HepG2 (cell line): ENCODE measurements at regions of chr17 and their contacts with region 1.

Region 1: GRCh38 chr17:42287926-42288802 is at the start of gene STAT5A:
- DNase-seq: peak; percentile 40
- ATAC-seq: peak; percentile 77
- H3K4me3 ChIP-seq: peak within 1 kb of the TSS; percentile 56 to 72 (median 62)
- H3K27ac ChIP-seq: no peak within 1 kb of the TSS
- H3K4me1 ChIP-seq: peaks cover 35% of the 10 kb centered on the region
- H3K27me3 ChIP-seq: peaks cover 6 to 35% of the 10 kb centered on the region in 2 experiments; a peak in 4 of 5 replicates
- CTCF ChIP-seq: peak; percentile 11; the same call in 1 of the 2 replicates
- EP300 ChIP-seq: no peak
- POLR2A ChIP-seq: no peak
- RAD21 ChIP-seq: no peak
- total RNA-seq, gene STAT5A: 4.1 and 4.5 TPM in 2 replicates

Region 2: DNA sequence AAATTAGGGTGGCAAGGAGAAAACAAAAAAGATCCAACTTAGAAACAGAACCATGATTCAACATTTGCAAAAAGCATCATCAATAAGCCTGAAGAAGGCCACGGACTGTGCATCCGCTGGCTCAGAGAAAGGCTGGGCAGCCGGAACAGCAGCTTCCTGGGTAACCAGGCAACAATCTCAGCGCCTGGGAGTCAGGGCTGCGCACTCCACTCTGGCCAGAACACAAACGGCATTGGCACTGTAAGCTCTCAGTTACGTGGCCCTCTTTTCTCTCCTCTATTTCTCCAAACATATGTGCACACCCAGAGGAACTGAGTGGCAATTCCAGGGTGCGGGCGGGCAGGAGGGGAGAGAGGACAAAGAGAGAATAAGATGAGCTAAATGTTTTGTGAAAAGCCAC is 87.5 kb before region 1 on chr17:
- CTCF ChIA-PET with region 1: no interaction called
- POLR2A ChIA-PET with region 1: no interaction called
- in situ Hi-C with region 1: no loop called
- intact Hi-C with region 1: no loop called
- DNase-seq: no peak
- ATAC-seq: no peak
- H3K4me3 ChIP-seq: no peak overlapping the region
- H3K27ac ChIP-seq: no peak overlapping the region
- H3K4me1 ChIP-seq: peaks cover 16% of the 10 kb centered on the region
- H3K27me3 ChIP-seq: no peaks in the 10 kb centered on the region
- CTCF ChIP-seq: no peak
- EP300 ChIP-seq: no peak
- POLR2A ChIP-seq: no peak
- RAD21 ChIP-seq: no peak

Region 3: DNA sequence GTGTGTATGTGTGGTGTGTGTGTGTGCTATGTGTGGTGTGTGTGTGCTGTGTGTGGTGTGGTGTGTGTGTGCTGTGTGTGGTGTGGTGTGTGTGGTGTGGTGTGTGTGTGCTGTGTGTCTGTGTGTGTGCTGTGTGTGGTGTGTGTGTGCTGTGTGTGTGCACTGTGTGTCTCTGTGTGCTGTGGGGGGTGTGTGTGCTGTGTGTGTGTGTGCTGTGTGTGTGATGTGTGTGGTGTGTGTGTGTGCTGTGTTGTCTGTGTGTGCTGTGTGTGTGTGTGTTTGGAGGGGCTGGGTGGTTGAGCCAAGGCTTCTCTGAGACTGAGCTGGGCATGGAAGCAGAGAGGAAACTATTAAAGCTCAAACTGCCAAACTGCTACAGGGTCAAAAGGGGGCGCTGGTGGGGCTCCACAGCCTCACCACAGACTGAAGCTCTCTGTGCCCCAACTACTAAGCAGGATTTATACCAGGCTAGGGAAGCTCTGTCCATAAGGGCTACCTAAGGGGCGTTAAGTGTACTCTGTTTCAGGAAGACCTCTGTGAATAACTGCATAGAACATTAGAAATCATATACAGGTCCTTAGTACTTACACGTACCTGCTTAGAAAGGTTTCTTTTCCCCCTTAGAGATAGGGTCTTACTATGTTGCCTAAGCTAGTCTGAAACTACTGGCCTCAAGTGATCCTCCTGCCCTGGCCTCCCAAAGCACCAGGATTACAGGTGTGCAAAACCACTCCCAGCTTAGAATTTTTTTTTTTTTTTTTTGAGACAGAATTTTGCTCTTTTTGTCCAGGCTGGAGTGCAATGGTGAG is 66.0 kb before region 1 on chr17:
- CTCF ChIA-PET with region 1: no interaction called
- POLR2A ChIA-PET with region 1: no interaction called
- in situ Hi-C with region 1: no loop called
- intact Hi-C with region 1: loop called (anchors 10 kb)
- DNase-seq: peak; percentile 56
- ATAC-seq: peak; percentile 81
- H3K4me3 ChIP-seq: no peak overlapping the region
- H3K27ac ChIP-seq: no peak overlapping the region
- H3K4me1 ChIP-seq: no peaks in the 10 kb centered on the region
- H3K27me3 ChIP-seq: no peaks in the 10 kb centered on the region
- CTCF ChIP-seq: peak; percentile 80
- EP300 ChIP-seq: no peak
- POLR2A ChIP-seq: no peak
- RAD21 ChIP-seq: peak; percentile 82

Region 4: DNA sequence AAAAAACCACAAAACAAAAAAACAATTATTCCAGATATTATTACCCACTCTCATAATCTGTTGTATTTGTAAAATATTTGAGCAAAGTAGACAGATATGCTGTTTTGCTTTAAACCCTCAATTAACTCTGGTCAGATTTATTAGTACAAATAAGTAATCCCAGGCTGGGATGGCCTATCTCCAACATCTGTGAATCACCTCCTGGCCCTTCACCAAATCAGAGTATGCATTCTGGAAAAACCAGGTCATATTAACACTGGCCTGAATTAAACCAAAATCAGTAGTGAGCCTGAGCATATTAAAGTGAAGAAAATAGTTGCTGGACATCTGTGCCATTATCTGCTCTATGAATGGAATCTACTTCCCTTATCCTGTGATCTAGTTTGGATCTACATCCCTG is 59.0 kb after region 1 on chr17:
- CTCF ChIA-PET with region 1: no interaction called
- POLR2A ChIA-PET with region 1: no interaction called
- in situ Hi-C with region 1: no loop called
- intact Hi-C with region 1: no loop called
- DNase-seq: no peak
- ATAC-seq: no peak
- H3K4me3 ChIP-seq: no peak overlapping the region
- H3K27ac ChIP-seq: no peak overlapping the region
- H3K4me1 ChIP-seq: peaks cover 30% of the 10 kb centered on the region
- H3K27me3 ChIP-seq: no peaks in the 10 kb centered on the region
- CTCF ChIP-seq: no peak
- EP300 ChIP-seq: no peak
- POLR2A ChIP-seq: no peak
- RAD21 ChIP-seq: no peak